ENCODE measurements at regions of chr1 and their contacts with region 1.

Region 1: DNA sequence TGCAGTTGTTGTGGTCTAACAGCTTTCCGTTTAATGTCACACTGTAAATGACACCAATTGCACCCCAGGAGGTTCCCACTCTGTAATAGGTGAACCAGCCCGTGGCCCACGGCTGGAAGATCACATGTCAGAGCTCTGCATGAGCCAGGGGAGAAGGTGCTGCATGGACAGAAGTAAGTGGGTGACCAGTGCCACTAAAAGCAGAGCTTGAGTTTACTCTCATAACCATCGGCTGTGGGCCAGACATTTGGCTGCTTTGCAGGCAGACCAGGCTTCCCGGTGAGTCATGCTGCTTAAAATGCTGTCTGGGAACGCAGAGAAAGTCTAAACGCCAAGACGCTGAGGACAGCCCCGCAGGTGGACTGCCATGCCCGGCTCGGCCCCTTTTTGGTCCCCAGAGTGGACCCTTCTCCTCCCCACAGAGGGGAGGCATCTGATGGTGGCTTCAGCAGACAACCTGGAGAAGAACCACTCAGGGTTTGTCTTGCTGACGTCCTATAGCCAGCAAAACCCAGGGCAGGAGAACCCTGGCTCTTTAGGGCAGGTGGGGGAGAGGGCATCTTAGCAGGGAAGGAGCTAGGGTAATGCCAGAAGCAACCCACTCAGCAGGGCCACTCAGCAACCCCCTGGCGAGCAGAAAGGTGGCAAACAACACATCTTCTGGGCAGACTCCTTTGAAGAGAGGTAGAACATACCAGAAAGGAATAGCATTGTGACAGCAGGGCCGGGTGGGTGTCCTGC is 7.3 kb downstream of the KIAA2013 start:
- DNase-seq: no peak
- ATAC-seq: peak; percentile 35

Region 2: DNA sequence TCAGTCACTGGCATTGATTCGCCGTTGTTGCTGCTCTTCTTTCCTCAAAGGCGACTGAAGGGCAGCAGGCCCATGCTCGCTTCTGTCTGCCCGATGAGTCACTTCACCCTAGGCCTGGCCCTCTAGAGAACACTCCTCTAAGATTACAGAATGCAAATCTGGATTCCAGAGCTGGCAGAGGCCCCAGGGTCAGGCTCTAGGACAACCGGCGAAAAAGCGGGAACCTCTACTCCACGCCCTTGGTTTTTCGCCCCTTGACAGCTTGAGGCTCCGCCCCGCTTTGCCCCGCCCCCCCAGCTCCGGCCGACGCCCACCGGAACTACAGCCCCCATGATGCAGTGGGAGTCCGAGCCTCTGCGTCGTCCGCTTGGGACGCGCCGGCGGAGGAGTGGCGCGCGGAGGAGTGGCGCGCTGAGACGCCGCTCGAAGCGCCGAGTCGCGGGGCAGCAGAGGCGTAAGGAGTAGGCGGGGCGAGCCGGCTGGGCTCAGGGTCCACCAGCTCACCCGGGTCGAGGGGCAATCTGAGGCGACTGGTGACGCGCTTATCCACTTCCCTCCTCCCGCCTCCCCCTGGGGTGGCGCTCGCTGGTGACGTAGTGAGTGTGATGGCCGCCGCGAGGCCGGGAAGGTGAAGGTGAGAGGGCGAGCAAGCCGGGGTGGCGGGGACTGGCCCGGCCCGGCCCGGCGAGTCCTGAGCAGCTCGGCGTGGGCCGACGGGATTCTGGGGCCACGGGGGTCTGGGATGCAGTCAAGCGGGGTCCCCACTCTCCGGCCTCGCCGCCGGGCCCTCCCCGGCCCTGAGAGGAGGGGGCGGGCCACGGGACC is 61.1 kb after region 1 on chr1 and contains the start of gene MFN2:
- intact Hi-C with region 1: loop called (anchors 10 kb)
- DNase-seq: peak; percentile 96
- ATAC-seq: peak; percentile 97
- total RNA-seq, gene MFN2: 68.6 TPM

Region 3: DNA sequence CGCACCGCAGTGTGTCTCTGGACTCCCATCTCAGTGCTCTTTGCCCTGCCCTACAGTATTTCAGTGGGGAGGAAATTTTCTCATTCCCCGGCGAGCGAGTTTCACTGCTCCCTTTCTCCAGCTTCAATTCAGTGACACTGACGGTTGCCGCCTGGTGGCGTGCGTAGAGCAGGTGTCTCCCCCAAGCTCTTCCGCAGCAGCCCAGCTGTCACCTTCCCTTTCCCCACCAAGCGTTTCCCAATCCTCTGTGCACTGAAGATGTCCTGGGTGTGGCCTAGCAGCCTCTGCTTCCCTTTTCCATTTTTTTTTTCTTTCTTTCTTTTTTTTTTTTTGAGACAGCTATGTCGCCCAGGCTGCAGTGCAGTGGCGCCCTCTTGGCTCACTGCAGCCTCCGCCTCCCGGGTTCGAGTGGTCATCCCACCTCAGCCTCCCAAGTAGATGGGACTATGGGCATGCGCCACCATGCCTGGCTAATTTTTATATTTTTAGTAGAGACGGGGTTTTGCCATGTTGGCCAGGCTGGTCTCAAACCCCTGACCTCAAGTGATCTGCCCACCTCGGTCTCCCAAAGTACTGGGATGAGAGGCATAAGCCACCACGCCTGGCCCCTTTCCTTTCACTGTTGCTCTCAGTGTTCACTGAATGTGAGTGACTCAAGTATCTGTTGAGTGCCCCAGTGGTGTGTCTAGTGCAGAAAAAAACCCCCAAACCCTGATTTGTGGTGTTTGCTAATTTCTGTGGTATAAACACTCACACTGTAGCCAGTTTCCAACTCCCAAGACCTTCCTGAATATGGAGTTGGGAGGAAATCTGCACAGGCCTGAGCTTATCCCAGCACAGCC is 277.9 kb after region 1 on chr1:
- intact Hi-C with region 1: no loop called
- DNase-seq: no peak
- ATAC-seq: peak; percentile 77

Measured in sciatic nerve (tissue), 2 donors.